Activated naive CD4-positive, alpha-beta T cell treated with anti-CD3 and anti-CD28 coated beads for 36 hours (primary cell): ENCODE measurements at regions of chr2 and their contacts with region 1.

Region 1: DNA sequence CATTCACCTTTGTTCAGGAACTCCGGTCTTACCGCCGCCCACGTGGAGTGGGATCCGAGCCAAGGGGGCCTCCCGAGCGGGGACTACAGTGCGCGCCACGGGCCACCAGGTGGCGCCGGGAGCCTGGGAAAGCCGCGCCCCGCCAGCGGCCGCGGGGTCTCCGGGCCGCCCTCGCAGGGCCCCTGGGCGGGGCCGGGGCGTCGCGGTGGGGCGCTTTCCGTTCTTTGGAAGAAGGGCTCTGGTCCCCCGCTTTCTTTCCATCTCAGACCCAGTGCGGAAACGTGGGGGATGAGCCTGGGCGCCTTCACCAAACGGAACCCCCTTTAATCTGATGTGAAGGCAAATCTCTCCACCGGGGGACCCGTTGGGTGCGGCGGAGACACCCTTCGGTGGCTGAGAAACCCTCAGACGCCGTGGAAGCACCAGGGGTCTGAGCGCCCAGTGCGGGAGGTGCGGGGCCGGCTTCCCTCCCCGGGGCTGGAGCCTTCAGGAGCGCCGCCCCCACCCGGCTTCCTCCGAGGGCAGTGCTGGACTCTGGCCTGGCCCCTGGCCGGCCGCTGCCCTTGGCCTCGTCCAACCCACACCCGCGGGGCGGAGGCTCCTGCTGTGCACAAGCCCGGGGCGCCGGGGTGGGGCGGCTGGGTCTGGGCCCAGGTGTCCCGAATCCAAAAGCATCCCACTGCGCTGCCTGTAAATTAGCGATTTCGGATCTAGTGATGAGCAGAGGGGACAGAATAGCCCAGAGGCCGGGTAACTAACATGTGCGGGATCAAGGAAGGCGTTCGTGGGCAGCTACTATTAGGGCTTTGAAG is 44.6 kb downstream of the GORASP2 start:
- DNase-seq: peak; percentile 92
- H3K4me3 Mint-ChIP-seq: peak overlapping the region; percentile 66
- H3K27ac Mint-ChIP-seq: peak overlapping the region; percentile 48
- H3K4me1 Mint-ChIP-seq: peaks cover 9% of the 10 kb centered on the region
- H3K27me3 Mint-ChIP-seq: no peaks in the 10 kb centered on the region

Region 2: DNA sequence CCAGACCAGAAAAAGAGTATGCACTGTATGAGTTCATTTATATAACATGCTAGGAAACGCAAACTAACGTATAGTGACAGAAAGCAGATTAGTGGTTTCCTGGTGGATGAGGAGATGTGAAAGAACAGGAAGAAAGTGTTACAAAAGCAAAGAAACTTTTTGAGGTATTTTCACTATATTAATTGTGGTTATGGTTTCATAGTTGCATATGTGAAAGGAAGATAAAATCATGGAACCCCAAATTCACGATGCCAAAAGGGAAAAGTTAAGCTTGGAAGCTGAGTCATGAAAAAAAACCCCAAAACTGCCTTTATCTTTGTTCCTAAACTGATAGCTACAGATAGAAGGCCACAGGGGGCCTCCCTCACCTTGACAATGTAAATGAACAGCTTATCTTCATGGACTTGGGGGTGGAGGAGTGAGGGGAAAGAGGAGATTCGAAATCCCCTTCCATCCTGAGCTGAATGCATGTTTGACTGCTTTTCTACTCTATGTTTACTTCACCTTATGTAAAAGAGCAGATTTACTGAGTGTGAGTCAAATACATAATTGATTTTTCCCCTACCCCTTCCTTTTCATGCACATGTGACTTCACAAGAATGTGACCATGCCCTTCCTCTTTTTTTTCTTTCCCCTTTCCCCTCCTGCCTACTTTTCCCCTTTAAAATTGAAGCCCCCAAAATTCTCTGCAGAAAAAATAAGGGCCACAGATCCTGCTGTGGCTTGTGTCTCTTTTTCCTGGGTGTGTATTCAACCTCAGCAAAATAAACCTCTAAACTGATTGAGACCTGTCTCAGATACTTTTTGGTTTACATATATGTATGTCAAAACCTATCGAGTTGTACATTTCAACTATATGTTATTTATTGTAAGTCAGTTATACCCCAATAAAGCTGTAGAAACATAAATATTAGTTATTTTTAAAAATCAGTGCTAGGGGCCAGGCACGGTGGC is 287.1 kb after region 1 on chr2:
- CTCF ChIA-PET with region 1: interaction called, 3 read pairs
- intact Hi-C with region 1: loop called (anchors 1 kb)
- DNase-seq: peak; percentile 70
- H3K4me3 Mint-ChIP-seq: no peak overlapping the region
- H3K27ac Mint-ChIP-seq: peak overlapping the region; percentile 44
- H3K4me1 Mint-ChIP-seq: peaks cover 35% of the 10 kb centered on the region
- H3K27me3 Mint-ChIP-seq: no peaks in the 10 kb centered on the region

Region 3: DNA sequence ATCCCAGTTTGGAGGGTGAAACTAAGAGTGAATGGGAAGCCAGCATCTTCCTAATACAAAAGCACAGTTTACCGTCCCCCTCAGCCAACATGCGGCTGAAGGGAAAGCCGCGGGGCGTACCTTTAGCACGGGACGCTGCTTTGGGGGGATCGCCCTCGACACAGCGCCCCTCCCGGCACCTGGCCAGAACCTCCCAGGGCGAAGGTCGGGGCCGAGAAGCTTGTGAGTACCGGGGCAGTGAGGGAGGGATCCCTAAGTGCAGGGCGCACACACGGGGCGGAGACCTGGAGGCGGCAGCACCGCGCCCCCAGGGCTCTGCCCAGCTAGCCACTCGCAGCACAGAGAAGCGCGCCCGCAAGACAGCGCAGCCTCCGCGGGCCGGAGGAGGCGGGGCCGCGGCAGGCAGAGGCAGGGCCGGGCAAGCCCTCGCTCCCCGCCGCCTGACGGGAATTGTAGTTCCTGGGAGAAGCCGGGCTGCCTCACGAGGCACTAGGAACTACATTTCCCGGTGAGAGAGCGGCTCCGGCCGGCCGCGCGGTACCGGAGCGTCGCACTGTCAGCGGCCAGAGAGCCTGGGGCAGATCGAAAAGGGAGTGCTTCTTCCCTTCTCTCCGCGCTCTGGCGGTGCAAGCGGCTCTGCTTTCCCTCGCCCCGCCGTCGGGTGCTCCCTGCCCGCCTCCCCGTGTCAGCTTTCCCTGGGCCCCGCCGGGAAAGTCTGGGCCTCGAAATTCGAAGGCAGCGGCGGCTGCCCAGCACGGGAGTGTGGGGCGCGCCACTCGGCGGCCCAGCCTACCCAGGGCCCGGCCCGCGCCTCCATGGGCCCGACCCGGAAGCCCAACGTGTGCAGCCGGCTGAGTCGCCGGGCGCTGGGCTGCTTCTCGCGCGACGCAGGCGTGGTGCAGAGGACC is 460.3 kb after region 1 on chr2 and contains the starts of genes DCAF17 and METTL8:
- CTCF ChIA-PET with region 1: interaction called, 4 read pairs
- intact Hi-C with region 1: loop called (anchors 1 kb)
- DNase-seq: peak; percentile 96
- H3K4me3 Mint-ChIP-seq: peak within 1 kb of the TSS; percentile 86
- H3K27ac Mint-ChIP-seq: peak within 1 kb of the TSS; percentile 94
- H3K4me1 Mint-ChIP-seq: peaks cover 54% of the 10 kb centered on the region
- H3K27me3 Mint-ChIP-seq: no peaks in the 10 kb centered on the region
- total RNA-seq, gene DCAF17: 21.1 to 21.3 TPM
- total RNA-seq, gene METTL8: 32.9 to 34.5 TPM

Region 4: DNA sequence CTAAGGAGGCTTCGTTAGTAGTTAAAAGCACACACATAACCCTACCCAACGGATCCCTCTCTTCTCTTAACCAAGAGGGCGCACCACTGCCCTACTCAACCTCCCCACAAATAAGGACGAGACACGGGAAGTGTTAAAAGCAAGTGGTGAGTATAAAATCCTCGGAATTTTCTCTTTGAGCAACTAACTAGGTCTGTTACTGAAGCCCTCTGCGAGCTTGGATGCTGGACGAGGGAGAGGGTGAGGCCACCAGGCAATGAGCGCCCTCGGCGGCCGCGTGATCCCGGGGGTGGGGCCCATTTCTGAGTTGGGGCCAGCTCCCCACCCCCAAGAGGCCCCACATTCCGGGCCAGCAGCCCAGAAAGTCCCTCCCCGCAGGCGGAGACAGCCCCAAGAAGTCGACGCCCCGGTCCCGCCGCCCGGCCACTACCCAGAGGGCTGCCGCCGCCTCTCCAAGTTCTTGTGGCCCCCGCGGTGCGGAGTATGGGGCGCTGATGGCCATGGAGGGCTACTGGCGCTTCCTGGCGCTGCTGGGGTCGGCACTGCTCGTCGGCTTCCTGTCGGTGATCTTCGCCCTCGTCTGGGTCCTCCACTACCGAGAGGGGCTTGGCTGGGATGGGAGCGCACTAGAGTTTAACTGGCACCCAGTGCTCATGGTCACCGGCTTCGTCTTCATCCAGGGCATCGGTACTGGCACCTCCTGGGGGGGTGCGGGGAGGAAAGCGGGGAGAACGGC is 548.5 kb after region 1 on chr2 and contains the start of gene CYBRD1:
- CTCF ChIA-PET with region 1: no interaction called
- intact Hi-C with region 1: loop called (anchors 10 kb)
- DNase-seq: peak; percentile 25
- H3K4me3 Mint-ChIP-seq: peak within 1 kb of the TSS; percentile 79
- H3K27ac Mint-ChIP-seq: no peak within 1 kb of the TSS
- H3K4me1 Mint-ChIP-seq: peaks cover 12% of the 10 kb centered on the region
- H3K27me3 Mint-ChIP-seq: peaks cover 39% of the 10 kb centered on the region
- total RNA-seq, gene CYBRD1: 0.76 to 0.77 TPM

Region 5: GRCh38 chr2:172095146-172095904 is 1121.6 kb after region 1 on chr2:
- CTCF ChIA-PET with region 1: no interaction called
- intact Hi-C with region 1: loop called (anchors 5 kb)
- DNase-seq: peak; percentile 87
- H3K4me3 Mint-ChIP-seq: peak overlapping the region; percentile 78
- H3K27ac Mint-ChIP-seq: peak overlapping the region; percentile 47
- H3K4me1 Mint-ChIP-seq: peaks cover 42% of the 10 kb centered on the region
- H3K27me3 Mint-ChIP-seq: peaks cover 75% of the 10 kb centered on the region